ENCODE measurements at regions of chr19 and their contacts with region 1.

Region 1: DNA sequence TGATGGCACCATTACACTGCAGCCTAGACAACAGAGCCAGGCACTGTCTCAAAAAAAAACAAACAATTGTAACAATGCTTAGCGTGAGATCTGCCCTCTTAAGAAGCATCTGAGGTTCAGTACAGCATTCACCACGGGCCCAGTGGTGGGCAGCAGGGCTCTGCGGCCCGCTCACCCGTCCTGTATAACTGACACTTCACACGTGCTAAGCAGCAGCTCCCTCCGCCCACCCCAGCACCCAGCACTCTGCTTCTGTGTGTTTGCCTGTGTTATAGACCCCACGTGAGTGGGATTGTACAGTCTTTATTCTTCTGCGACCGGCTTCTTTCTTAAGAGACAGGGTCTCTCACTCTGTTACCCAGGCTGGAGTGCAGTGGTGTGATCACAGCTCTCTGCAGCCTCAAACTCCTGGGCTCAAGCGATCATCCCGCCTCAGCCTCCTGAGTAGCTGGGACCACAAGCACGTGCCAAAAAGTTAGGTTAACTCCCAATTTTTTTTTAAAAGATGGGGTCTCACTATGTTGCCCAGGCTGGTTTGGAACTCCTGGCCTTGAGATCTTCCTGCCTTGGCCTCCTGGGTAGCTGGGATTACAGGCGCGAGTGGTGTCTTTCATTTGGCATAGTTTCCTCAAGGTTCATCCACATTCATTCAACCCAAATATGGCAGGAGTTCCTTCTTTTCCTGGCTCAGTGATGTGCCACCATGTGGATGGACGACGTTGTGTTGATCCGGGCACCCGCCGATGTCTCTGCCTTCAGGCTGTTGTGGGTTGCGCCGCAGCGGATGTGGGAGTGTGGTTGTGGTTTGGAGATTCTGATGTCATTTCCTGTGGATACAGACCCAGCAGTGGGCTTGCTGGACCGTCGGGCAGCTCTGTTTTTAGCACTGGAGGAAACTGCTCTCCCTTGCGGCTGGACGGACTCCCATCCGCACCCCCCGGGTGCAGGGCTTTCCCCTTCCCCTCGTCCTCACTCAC is 170.0 kb downstream of the KDM4B start:
- DNase-seq: peak in 1 of 7 donors; percentile 41
- H3K4me3 ChIP-seq: no peak overlapping the region
- H3K27ac ChIP-seq: no peak overlapping the region
- H3K4me1 ChIP-seq: no peaks in the 10 kb centered on the region
- H3K27me3 ChIP-seq: no peaks in the 10 kb centered on the region
- CTCF ChIP-seq: no peak
- POLR2A ChIP-seq: no peak

Region 2: GRCh38 chr19:5068233-5069072 is 70.4 kb before region 1 on chr19:
- intact Hi-C with region 1: loop called in 1 of 2 experiments (anchors 10 kb)
- DNase-seq: peak in 5 of 7 donors; percentile 42 to 59 (median 52)
- H3K4me3 ChIP-seq: no peak overlapping the region
- H3K27ac ChIP-seq: peak overlapping the region in 1 of 5 donors; percentile 47
- H3K4me1 ChIP-seq: peaks cover 13 to 15% of the 10 kb centered on the region in 2 donors
- H3K27me3 ChIP-seq: no peaks in the 10 kb centered on the region
- CTCF ChIP-seq: no peak
- POLR2A ChIP-seq: no peak

Measured in adrenal gland (tissue), 19 donors.